Cardiac septum (tissue), 1 donor: ENCODE measurements at regions of chr20 and their contacts with region 1.

Region 1: GRCh38 chr20:23116311-23117089 is 30.4 kb upstream of the CD93 start:
- DNase-seq: peak; percentile 73

Region 2: DNA sequence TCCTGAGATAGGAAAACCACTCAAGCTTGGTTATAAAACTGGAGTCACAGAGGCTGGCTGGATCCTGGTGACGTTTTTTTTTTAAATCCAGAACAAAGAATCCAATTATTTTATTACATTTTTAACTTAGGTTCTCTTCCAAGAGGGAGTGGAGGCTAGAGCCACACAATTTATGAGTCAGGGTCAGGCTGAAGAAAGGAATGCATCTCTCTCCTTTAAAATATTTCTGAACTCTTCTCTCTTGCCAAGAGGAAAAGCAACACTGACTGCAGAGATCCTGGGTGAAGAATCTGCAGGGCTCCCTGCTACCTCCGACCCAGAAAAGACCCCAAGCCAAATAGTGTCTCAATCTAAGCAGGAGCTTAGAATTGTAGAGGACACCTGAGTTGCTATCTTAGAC is 169.9 kb before region 1 on chr20:
- intact Hi-C with region 1: no loop called
- DNase-seq: no peak

Region 3: GRCh38 chr20:23161968-23162696 is 45.6 kb after region 1 on chr20:
- intact Hi-C with region 1: loop called (anchors 5 kb)
- DNase-seq: peak; percentile 93